ENCODE measurements at regions of chr15 and their contacts with region 1.

Region 1: GRCh38 chr15:70415398-70415797 is 317.7 kb upstream of the TLE3 start:
- DNase-seq: no peak
- ATAC-seq: no peak
- H3K4me3 ChIP-seq: no peak overlapping the region
- H3K27ac ChIP-seq: no peak overlapping the region
- H3K4me1 ChIP-seq: no peaks in the 10 kb centered on the region
- H3K27me3 ChIP-seq: no peaks in the 10 kb centered on the region
- CTCF ChIP-seq: no peak
- POLR2A ChIP-seq: no peak

Region 2: GRCh38 chr15:70339681-70340493 is 75.5 kb before region 1 on chr15:
- intact Hi-C with region 1: no loop called
- DNase-seq: peak in 1 of 4 donors; percentile 48
- ATAC-seq: no peak
- H3K4me3 ChIP-seq: no peak overlapping the region
- H3K27ac ChIP-seq: peak overlapping the region in 2 of 4 donors; percentile 8 to 29
- H3K4me1 ChIP-seq: peaks cover 7% of the 10 kb centered on the region
- H3K27me3 ChIP-seq: no peaks in the 10 kb centered on the region
- CTCF ChIP-seq: no peak
- POLR2A ChIP-seq: no peak

Region 3: GRCh38 chr15:70474471-70475396 is 59.3 kb after region 1 on chr15:
- intact Hi-C with region 1: loop called (anchors 10 kb)
- DNase-seq: peak in 2 of 4 donors; percentile 39 to 56
- ATAC-seq: peak; percentile 47
- H3K4me3 ChIP-seq: no peak overlapping the region
- H3K27ac ChIP-seq: peak overlapping the region in 2 of 4 donors; percentile 53 to 64
- H3K4me1 ChIP-seq: no peaks in the 10 kb centered on the region
- H3K27me3 ChIP-seq: no peaks in the 10 kb centered on the region
- CTCF ChIP-seq: no peak
- POLR2A ChIP-seq: no peak